ENCODE measurements at regions of chr12 and their contacts with region 1.

Region 1: DNA sequence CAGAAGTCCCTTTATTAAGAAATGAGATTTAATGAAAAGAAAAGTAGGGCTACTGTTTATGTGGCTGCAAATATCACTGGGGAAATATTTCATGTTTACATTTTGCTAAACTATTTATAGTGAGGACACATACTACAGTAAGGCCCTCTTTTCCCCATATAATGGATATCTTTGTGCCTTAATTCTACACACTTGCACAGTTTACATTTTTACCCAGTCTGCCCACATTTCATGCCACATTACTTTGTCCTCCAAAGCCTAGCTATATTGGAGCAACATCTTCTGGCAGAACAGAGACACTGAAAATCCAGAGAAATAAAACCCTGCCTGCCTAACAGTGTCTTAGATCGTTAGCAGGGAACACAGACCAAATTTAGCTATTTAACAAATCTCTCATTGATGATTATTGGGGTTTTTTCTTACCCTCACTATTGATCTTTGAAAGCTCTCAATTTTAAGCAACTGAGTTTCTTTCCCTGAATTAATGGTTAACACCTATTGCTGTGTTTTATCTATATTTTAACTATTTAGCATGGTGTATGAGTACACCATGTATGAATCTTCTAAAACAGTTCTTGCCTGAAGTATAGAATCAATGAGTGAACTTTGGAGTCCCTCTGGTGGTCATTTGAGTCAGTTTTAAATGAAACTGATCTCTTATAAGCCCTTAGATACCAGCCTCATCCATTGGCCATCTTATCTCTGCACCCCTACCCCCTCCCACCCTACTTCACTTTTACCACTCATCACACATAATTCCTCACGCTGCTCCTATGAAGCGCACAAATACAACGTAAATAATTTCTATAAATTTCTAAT is 170.2 kb downstream of the BCAT1 start:
- DNase-seq: no peak
- H3K4me3 Mint-ChIP-seq: no peak overlapping the region
- H3K27ac Mint-ChIP-seq: no peak overlapping the region
- H3K4me1 Mint-ChIP-seq: no peaks in the 10 kb centered on the region
- H3K27me3 Mint-ChIP-seq: peaks cover 9% of the 10 kb centered on the region

Region 2: DNA sequence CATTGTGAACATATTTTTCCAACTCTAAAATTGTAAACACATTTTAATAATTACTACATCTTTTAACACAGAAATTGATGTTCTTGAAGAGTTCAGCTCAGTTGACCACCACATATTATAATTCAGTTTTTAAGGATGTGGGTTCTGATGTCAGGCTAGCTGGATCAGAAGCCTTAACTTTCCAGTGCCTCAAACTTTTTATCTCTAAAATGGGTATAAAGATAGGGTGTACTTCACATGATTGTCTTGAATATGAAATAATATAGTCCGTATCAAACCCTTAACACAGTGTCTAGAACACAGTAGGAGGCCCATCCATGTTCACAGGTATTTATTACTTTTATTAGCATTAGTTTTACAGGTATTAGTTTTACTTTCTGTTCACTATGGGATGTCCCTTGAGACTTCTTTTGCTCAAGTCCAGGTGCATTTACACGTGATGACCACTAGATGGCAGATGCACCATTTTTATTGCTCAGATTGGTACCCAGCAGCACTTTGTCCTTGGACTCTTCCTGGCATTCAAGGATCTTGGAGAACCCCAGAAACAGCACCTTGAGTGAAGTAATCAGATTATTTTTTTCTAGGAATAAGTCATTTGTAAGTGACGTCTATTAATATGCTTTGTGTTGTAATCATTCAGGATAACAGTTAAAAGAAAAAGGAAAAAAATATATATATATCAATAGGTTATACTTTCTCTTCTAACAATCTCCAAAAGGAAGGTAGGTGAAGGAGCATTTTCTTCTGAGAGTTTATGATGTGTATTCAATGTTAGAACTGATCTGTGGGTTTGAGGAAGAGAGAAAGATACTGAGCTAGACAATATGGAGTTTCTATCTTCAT is 1573.5 kb before region 1 on chr12:
- CTCF ChIA-PET with region 1: interaction called, 3 read pairs
- POLR2A ChIA-PET with region 1: no interaction called
- intact Hi-C with region 1: loop called (anchors 2 kb)
- DNase-seq: no peak
- H3K4me3 Mint-ChIP-seq: no peak overlapping the region
- H3K27ac Mint-ChIP-seq: no peak overlapping the region
- H3K4me1 Mint-ChIP-seq: no peaks in the 10 kb centered on the region
- H3K27me3 Mint-ChIP-seq: peaks cover 3% of the 10 kb centered on the region

Region 3: DNA sequence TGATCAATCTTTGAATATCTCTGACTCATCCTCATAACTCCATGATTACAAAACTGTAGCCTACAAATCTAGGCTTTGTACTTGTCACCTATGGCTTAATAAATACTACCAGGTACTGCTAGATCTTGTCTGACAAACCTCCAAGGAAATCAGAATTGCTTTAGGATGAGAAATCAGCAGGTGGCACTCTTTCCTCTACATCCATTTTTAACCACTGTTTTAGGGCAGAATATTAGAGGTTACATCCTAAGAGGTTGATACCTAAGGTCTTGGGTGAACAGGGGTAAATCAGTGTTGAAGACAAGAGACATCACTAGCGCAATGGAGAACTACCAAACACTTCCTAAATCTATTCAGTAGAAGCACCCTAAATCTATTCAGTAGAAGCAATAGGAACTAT is 766.2 kb before region 1 on chr12:
- CTCF ChIA-PET with region 1: no interaction called
- POLR2A ChIA-PET with region 1: no interaction called
- intact Hi-C with region 1: loop called (anchors 2 kb)
- DNase-seq: no peak
- H3K4me3 Mint-ChIP-seq: no peak overlapping the region
- H3K27ac Mint-ChIP-seq: no peak overlapping the region
- H3K4me1 Mint-ChIP-seq: no peaks in the 10 kb centered on the region
- H3K27me3 Mint-ChIP-seq: no peaks in the 10 kb centered on the region

Region 4: GRCh38 chr12:24600996-24601395 is 177.7 kb before region 1 on chr12:
- CTCF ChIA-PET with region 1: interaction called, 3 read pairs
- POLR2A ChIA-PET with region 1: no interaction called
- intact Hi-C with region 1: loop called (anchors 2 kb)
- DNase-seq: no peak
- H3K4me3 Mint-ChIP-seq: no peak overlapping the region
- H3K27ac Mint-ChIP-seq: peak overlapping the region; percentile 42
- H3K4me1 Mint-ChIP-seq: peaks cover 5% of the 10 kb centered on the region
- H3K27me3 Mint-ChIP-seq: peaks cover 5% of the 10 kb centered on the region

Region 5: DNA sequence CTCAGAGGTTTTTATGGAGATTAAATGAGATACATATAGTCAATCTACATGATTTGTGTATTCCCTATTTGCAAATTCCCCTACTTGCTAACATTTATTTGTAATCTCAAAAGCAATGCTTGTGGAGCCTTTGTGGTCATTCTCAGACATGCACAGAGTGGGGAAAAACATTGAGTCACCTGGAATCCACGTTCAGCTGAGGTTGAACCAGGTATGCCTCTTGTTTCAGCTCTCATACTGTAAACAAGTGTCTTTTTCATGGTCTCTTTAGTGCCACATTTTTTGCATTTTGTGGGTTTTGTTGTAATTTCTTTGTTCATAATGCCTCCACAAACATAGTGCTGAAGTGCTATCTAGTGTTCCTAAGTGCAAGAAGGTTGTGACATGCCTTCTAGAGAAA is 11.7 kb before region 1 on chr12:
- CTCF ChIA-PET with region 1: interaction called, 14 read pairs
- POLR2A ChIA-PET with region 1: no interaction called
- intact Hi-C with region 1: no loop called
- DNase-seq: peak; percentile 36
- H3K4me3 Mint-ChIP-seq: no peak overlapping the region
- H3K27ac Mint-ChIP-seq: peak overlapping the region; percentile 69
- H3K4me1 Mint-ChIP-seq: peaks cover 13% of the 10 kb centered on the region
- H3K27me3 Mint-ChIP-seq: peaks cover 6% of the 10 kb centered on the region

Region 6: DNA sequence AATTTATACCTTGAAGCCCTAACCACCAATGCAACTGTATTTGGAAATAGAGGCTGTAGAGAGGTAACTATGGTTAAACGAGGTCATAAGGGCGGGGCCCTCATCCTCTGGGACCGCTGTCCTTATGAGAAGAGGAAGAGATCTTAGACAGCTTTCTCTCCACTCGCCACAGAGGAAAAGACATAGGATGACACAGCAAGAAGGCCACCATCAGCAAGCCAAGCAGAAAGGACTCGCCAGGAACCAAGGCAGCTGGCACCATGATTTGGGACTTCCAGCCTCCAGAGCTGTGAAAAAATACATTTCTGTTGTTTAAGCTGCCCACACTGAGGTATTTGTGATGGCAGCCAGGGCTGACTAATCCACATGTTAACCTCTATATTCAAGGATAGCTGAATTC is 200.6 kb after region 1 on chr12:
- CTCF ChIA-PET with region 1: no interaction called
- POLR2A ChIA-PET with region 1: no interaction called
- intact Hi-C with region 1: no loop called
- DNase-seq: no peak
- H3K4me3 Mint-ChIP-seq: no peak overlapping the region
- H3K27ac Mint-ChIP-seq: no peak overlapping the region
- H3K4me1 Mint-ChIP-seq: no peaks in the 10 kb centered on the region
- H3K27me3 Mint-ChIP-seq: peaks cover 6% of the 10 kb centered on the region